Naive thymus-derived CD4-positive, alpha-beta T cell (primary cell): ENCODE measurements at regions of chr17 and their contacts with region 1.

Region 1: DNA sequence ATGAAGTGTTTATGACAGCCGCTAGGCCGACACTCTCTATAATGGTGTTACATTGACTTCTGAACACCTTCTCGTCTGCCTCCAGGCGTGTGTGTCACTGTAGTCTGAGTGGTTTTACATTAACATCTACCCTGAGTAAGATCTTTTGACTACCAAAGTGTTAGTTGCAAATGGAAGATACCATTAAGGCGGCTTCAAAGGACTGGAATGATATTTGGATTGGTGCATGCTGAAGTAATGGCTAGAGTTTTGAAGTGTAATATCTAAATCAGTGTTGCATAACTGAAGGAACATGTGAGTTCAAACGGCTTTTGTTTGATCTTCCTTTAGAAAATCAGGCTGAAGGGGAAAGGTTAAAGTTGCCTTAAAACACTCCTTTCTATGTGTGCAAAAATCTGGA is 52.2 kb downstream of the BCAS3 start:
- DNase-seq: no peak
- ATAC-seq: no peak
- H3K4me3 ChIP-seq: no peak overlapping the region
- H3K4me3 Mint-ChIP-seq: peak overlapping the region in 1 of 10 donors; percentile 48
- H3K27ac ChIP-seq: no peak overlapping the region
- H3K27ac Mint-ChIP-seq: no peak overlapping the region
- H3K4me1 ChIP-seq: no peaks in the 10 kb centered on the region
- H3K4me1 Mint-ChIP-seq: peaks cover 6 to 19% (median 8%) of the 10 kb centered on the region in 7 donors
- H3K27me3 ChIP-seq: no peaks in the 10 kb centered on the region
- H3K27me3 Mint-ChIP-seq: no peaks in the 10 kb centered on the region

Region 2: DNA sequence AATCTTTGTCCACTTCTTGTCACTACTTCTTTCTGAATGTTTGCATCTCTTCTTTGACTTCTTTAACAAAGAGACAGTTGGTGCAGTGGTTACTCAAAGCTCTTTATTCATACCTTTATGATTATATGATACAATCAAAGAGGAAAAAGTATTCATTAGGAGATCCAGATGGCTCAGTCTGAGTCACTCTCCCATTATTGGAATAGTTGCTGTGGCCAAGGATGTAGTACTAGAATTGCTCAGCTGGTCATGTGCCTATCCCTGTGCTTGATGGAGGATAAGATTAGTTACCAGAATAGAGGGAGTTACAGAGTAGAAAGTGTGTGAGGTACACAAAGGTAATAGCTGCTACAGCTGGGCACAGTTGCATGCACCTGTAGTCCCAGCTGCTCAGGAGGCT is 33.9 kb before region 1 on chr17:
- CTCF ChIA-PET with region 1: no interaction called
- POLR2A ChIA-PET with region 1: no interaction called
- intact Hi-C with region 1: no loop called
- DNase-seq: no peak
- ATAC-seq: no peak
- H3K4me3 ChIP-seq: no peak overlapping the region
- H3K4me3 Mint-ChIP-seq: no peak overlapping the region
- H3K27ac ChIP-seq: no peak overlapping the region
- H3K27ac Mint-ChIP-seq: no peak overlapping the region
- H3K4me1 ChIP-seq: no peaks in the 10 kb centered on the region
- H3K4me1 Mint-ChIP-seq: peaks cover 0 to 5% (median 0%) of the 10 kb centered on the region in 7 donors
- H3K27me3 ChIP-seq: no peaks in the 10 kb centered on the region
- H3K27me3 Mint-ChIP-seq: no peaks in the 10 kb centered on the region

Region 3: GRCh38 chr17:60792250-60792898 is 62.5 kb after region 1 on chr17:
- CTCF ChIA-PET with region 1: no interaction called
- POLR2A ChIA-PET with region 1: no interaction called
- intact Hi-C with region 1: loop called in 1 of 2 experiments (anchors 10 kb)
- DNase-seq: no peak
- ATAC-seq: no peak
- H3K4me3 ChIP-seq: no peak overlapping the region
- H3K4me3 Mint-ChIP-seq: no peak overlapping the region
- H3K27ac ChIP-seq: no peak overlapping the region
- H3K27ac Mint-ChIP-seq: peak overlapping the region in 1 of 9 donors; percentile 22
- H3K4me1 ChIP-seq: no peaks in the 10 kb centered on the region
- H3K4me1 Mint-ChIP-seq: peaks cover 0 to 13% (median 11%) of the 10 kb centered on the region in 7 donors
- H3K27me3 ChIP-seq: no peaks in the 10 kb centered on the region
- H3K27me3 Mint-ChIP-seq: peaks cover 0 to 3% (median 0%) of the 10 kb centered on the region in 5 donors